T-cell (primary cell): ENCODE measurements at regions of chr1 and their contacts with region 1.

Region 1: DNA sequence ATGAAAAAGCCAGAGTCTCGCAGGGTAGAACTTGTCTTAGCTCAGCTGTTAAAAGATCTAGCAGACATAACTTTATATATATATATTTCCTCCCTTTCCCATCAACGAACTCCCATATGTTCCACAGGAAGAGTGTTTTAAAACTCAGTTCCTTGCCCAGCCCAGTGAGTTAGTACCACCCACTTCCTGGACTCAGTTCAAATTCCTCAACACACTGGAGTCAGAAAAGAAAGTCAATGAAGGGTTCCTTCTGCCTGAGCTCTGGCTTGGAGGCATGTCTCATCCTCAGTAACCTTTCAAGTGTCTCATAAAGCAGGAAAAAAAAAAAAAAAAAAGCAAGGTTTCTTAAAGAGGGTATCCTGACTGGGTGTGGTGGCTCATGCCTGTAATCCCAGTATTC is 15.6 kb downstream of the TPM3 start:
- DNase-seq: no peak
- ATAC-seq: peak in 2 of 4 experiments; percentile 25 to 29
- H3K4me3 ChIP-seq: no peak overlapping the region
- H3K4me3 Mint-ChIP-seq: peak overlapping the region in 1 of 3 donors; percentile 95
- H3K27ac ChIP-seq: no peak overlapping the region
- H3K27ac Mint-ChIP-seq: peak overlapping the region; percentile 62 to 74
- H3K4me1 ChIP-seq: peaks cover 48 to 61% of the 10 kb centered on the region in 2 experiments
- H3K4me1 Mint-ChIP-seq: peaks cover 73 to 77% (median 73%) of the 10 kb centered on the region in 3 donors
- H3K27me3 ChIP-seq: no peaks in the 10 kb centered on the region
- H3K27me3 Mint-ChIP-seq: no peaks in the 10 kb centered on the region

Region 2: DNA sequence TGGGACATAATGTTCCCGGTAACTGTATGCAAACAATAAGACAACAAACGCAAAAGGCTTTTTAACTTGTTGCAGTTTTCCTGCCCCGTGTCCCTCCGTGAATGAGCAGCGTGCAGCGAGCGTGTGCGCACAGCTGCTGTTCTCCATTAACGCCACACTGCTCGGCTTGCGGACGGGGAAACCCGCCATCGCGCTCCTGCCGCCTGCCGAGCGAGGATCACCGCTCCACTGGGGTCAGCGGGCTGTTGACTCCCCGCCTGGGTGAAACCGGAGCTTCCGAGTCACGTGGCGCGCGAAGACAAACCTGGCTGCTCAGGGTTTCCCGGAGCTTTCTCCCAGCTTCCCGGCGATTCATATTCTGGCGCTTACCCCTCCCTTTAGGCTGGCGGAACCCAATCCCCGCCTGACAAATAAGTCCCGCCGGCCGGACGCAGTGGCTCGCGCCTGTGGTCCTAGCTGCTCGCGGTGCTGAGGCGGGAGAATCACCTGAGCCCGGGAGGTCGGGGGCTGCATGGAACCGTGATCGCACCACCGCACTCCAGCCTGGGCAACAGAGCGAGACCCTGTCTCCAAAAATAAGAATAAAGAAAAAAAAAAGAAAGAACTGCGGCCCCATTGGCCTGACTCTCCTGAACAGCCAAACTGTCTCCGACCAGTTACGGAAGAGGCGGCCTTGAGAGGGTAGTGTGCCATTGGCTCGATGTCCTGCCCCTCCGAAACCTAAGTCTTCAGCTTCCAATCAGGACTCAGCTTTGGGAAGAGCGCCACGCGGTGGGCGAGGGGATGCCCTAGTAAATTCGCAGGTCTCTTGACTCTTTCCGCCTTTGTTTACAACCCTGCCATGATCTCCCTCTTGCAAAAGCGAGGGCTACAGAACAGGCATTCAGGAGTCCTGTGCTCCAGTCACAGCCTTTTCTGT is 209.0 kb before region 1 on chr1 and contains the start of gene CREB3L4:
- CTCF ChIA-PET with region 1: no interaction called
- POLR2A ChIA-PET with region 1: no interaction called
- DNase-seq: peak; percentile 69 to 94 (median 84)
- ATAC-seq: peak; percentile 85 to 87 (median 86)
- H3K4me3 ChIP-seq: peak within 1 kb of the TSS; percentile 78 to 91
- H3K4me3 Mint-ChIP-seq: peak within 1 kb of the TSS; percentile 86 to 95 (median 92)
- H3K27ac ChIP-seq: peak within 1 kb of the TSS; percentile 82
- H3K27ac Mint-ChIP-seq: peak within 1 kb of the TSS; percentile 97 to 98
- H3K4me1 ChIP-seq: peaks cover 20 to 53% of the 10 kb centered on the region in 2 experiments
- H3K4me1 Mint-ChIP-seq: peaks cover 48 to 67% (median 53%) of the 10 kb centered on the region in 3 donors
- H3K27me3 ChIP-seq: no peaks in the 10 kb centered on the region
- H3K27me3 Mint-ChIP-seq: no peaks in the 10 kb centered on the region
- total RNA-seq, gene CREB3L4: 3.3 to 9.0 (median 6.3) TPM

Region 3: DNA sequence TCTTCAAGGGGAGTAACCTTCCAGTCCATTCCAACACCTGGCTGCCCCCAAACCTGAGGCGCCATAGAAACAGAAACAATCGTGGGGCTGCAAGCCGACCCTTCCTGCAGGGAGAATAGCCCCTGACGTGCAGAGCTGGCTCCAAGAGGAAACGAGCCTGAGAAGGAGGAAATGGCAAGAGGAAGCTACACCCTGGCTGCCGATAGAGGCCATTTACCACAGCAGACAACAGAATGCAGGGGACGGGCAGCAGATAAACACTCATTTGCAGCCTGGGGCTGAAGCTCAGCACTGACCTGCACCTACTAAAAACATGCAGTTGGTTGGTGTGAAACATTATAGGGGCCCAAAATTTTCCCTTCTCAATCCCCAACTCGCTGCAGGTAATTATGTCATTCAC is 316.9 kb after region 1 on chr1:
- CTCF ChIA-PET with region 1: no interaction called
- POLR2A ChIA-PET with region 1: interaction called in 1 of 2 experiments, 12 read pairs
- DNase-seq: peak in 12 of 35 experiments; percentile 3 to 44 (median 17)
- ATAC-seq: peak; percentile 66 to 79 (median 73)
- H3K4me3 ChIP-seq: peak overlapping the region in 1 of 2 donors; percentile 30
- H3K4me3 Mint-ChIP-seq: peak overlapping the region in 2 of 3 donors; percentile 52 to 62
- H3K27ac ChIP-seq: no peak overlapping the region
- H3K27ac Mint-ChIP-seq: peak overlapping the region; percentile 65 to 85
- H3K4me1 ChIP-seq: peaks cover 27 to 33% of the 10 kb centered on the region in 2 experiments
- H3K4me1 Mint-ChIP-seq: peaks cover 41 to 47% (median 44%) of the 10 kb centered on the region in 3 donors
- H3K27me3 ChIP-seq: no peaks in the 10 kb centered on the region
- H3K27me3 Mint-ChIP-seq: no peaks in the 10 kb centered on the region